Activated CD8-positive, alpha-beta memory T cell treated with anti-CD3 and anti-CD28 coated beads, Interleukin-2, amount 10 ng/mL, durations not matched to agents 7 days and 5 days (primary cell): ENCODE measurements at regions of chr11 and their contacts with region 1.

Region 1: GRCh38 chr11:78100676-78101456 is 21.2 kb upstream of the NDUFC2 start:
- DNase-seq: no peak
- ATAC-seq: no peak
- H3K4me3 Mint-ChIP-seq: no peak overlapping the region
- H3K27ac Mint-ChIP-seq: no peak overlapping the region
- H3K4me1 Mint-ChIP-seq: no peaks in the 10 kb centered on the region
- H3K27me3 Mint-ChIP-seq: no peaks in the 10 kb centered on the region

Region 2: GRCh38 chr11:77879218-77879617 is 221.6 kb before region 1 on chr11:
- CTCF ChIA-PET with region 1: no interaction called
- DNase-seq: peak; percentile 67
- ATAC-seq: peak; percentile 85
- H3K4me3 Mint-ChIP-seq: no peak overlapping the region
- H3K27ac Mint-ChIP-seq: peak overlapping the region; percentile 60
- H3K4me1 Mint-ChIP-seq: peaks cover 21% of the 10 kb centered on the region
- H3K27me3 Mint-ChIP-seq: no peaks in the 10 kb centered on the region

Region 3: DNA sequence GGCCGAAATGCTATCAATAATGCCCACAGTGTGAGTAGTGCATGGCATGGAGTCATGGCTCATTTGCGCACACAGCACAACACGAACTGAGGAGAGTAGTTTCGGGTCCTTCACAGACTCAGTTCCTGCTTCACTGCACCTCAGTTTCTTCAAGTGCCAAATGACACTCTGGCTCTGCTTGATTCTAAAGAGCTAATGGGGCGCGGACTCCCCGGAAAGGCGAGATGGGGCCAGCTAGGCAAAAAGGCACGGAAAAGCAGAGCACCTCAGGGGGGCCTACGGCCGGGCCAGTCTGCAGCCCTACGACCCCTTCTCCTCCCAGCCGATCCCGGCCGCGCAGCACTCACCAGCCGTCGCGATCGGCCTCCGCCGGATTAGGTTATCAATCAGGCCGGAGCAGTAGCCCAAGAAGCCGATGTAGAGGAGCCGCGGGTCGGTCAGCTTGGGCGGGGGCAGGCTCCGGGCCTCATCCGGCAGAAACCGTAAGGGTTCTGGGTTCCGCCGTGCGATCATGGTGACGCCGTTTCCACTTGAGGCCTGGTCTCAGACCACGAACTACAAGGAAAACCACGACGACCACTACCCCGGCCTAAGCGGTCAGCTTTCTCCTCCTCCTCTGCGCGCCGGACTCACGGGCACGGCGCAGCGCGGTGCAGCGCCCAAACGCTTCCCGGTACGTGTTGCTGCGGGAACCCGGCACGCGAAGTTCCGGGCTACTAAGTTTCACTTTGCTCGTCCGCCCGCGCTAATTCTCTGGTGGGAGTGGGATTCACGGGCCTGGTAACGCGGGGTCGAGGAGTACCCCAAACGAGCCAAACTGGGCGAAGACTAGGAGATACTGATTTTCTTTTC is 21.4 kb before region 1 on chr11 and contains the start of gene NDUFC2:
- CTCF ChIA-PET with region 1: interaction called, 10 read pairs
- DNase-seq: peak; percentile 80
- ATAC-seq: peak; percentile 83
- H3K4me3 Mint-ChIP-seq: peak within 1 kb of the TSS; percentile 96
- H3K27ac Mint-ChIP-seq: peak within 1 kb of the TSS; percentile 86
- H3K4me1 Mint-ChIP-seq: peaks cover 55% of the 10 kb centered on the region
- H3K27me3 Mint-ChIP-seq: no peaks in the 10 kb centered on the region
- total RNA-seq, gene NDUFC2: 179 to 201 TPM